ENCODE measurements at regions of chr4 and their contacts with region 1.

Region 1: DNA sequence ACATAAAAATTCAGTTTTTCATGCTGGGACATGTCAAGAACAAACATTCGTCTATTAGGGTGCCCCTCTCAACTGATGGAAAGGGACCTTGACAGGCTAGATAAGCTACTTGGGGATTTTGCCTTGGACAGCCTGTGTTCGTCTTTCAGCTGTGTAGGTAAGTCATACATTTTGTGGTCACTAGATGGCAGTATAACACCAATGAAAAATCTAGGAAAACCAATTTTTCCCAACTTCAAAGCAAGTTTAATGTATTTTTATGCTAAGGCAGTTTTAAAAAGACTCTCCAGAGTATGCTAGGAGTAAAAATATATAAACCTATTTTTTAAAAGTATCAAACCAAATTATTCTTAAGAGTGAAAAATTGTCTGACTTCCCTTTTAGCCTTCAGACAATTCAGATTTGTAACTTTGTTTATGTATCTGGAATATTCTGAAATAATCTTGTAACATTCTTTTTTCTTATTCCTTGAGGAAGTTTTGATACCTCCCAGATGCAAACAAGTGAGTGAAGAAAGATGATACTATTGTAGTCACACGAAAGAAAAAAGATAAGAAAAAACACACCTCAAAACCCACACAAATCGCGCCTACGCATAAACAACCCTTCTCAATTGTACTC is 158.3 kb downstream of the CPE start:
- DNase-seq: peak; percentile 6
- ATAC-seq: no peak
- H3K4me3 Mint-ChIP-seq: no peak overlapping the region
- H3K27ac Mint-ChIP-seq: no peak overlapping the region
- H3K4me1 Mint-ChIP-seq: no peaks in the 10 kb centered on the region
- H3K27me3 Mint-ChIP-seq: peaks cover 5% of the 10 kb centered on the region

Region 2: GRCh38 chr4:165493359-165493758 is 43.8 kb before region 1 on chr4:
- CTCF ChIA-PET with region 1: interaction called, 4 read pairs
- POLR2A ChIA-PET with region 1: no interaction called
- intact Hi-C with region 1: loop called in 1 of 2 experiments (anchors 2 kb)
- DNase-seq: peak; percentile 84
- ATAC-seq: peak; percentile 96
- H3K4me3 Mint-ChIP-seq: no peak overlapping the region
- H3K27ac Mint-ChIP-seq: no peak overlapping the region
- H3K4me1 Mint-ChIP-seq: peaks cover 4% of the 10 kb centered on the region
- H3K27me3 Mint-ChIP-seq: peaks cover 23% of the 10 kb centered on the region

Region 3: DNA sequence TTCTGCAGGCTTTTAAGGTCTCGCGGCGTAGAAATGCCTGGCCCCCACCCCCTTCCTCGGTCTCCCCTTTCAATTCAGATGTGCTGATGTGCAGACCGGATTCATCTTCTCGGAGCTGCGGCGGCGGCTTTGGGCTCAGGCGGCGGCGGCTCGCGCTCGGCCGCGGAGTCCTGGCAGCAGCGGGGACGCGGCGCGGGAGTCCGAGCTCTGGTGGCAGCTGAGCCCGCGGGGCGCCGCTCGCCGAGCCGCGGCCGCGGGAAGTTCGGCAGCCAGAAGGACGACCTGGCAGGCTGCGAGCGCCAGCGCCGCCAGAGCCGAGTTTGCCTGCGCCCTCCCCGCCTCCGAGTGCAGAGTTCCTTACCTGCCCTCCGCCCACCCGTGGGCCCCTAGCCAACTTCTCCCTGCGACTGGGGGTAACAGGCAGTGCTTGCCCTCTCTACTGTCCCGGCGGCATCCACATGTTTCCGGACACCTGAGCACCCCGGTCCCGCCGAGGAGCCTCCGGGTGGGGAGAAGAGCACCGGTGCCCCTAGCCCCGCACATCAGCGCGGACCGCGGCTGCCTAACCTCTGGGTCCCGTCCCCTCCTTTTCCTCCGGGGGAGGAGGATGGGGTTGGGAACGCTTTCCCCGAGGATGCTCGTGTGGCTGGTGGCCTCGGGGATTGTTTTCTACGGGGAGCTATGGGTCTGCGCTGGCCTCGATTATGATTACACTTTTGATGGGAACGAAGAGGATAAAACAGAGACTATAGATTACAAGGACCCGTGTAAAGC is 336.3 kb after region 1 on chr4:
- CTCF ChIA-PET with region 1: no interaction called
- POLR2A ChIA-PET with region 1: no interaction called
- intact Hi-C with region 1: loop called in 1 of 2 experiments (anchors 10 kb)
- DNase-seq: peak; percentile 9
- ATAC-seq: no peak
- H3K4me3 Mint-ChIP-seq: peak overlapping the region; percentile 9
- H3K27ac Mint-ChIP-seq: no peak overlapping the region
- H3K4me1 Mint-ChIP-seq: peaks cover 13% of the 10 kb centered on the region
- H3K27me3 Mint-ChIP-seq: peaks cover 44% of the 10 kb centered on the region

Region 4: GRCh38 chr4:166091912-166092510 is 554.9 kb after region 1 on chr4:
- CTCF ChIA-PET with region 1: interaction called, 7 read pairs
- POLR2A ChIA-PET with region 1: no interaction called
- intact Hi-C with region 1: loop called (anchors 1 kb)
- DNase-seq: no peak
- ATAC-seq: no peak
- H3K4me3 Mint-ChIP-seq: no peak overlapping the region
- H3K27ac Mint-ChIP-seq: no peak overlapping the region
- H3K4me1 Mint-ChIP-seq: no peaks in the 10 kb centered on the region
- H3K27me3 Mint-ChIP-seq: no peaks in the 10 kb centered on the region

Region 5: GRCh38 chr4:166252487-166253402 is 715.6 kb after region 1 on chr4:
- CTCF ChIA-PET with region 1: no interaction called
- POLR2A ChIA-PET with region 1: no interaction called
- intact Hi-C with region 1: loop called in 1 of 2 experiments (anchors 2 kb)
- DNase-seq: no peak
- ATAC-seq: no peak
- H3K4me3 Mint-ChIP-seq: no peak overlapping the region
- H3K27ac Mint-ChIP-seq: no peak overlapping the region
- H3K4me1 Mint-ChIP-seq: no peaks in the 10 kb centered on the region
- H3K27me3 Mint-ChIP-seq: no peaks in the 10 kb centered on the region

Region 6: GRCh38 chr4:166594326-166594946 is 1057.3 kb after region 1 on chr4:
- CTCF ChIA-PET with region 1: no interaction called
- POLR2A ChIA-PET with region 1: no interaction called
- intact Hi-C with region 1: loop called in 1 of 2 experiments (anchors 10 kb)
- DNase-seq: peak; percentile 7
- ATAC-seq: no peak
- H3K4me3 Mint-ChIP-seq: no peak overlapping the region
- H3K27ac Mint-ChIP-seq: no peak overlapping the region
- H3K4me1 Mint-ChIP-seq: no peaks in the 10 kb centered on the region
- H3K27me3 Mint-ChIP-seq: no peaks in the 10 kb centered on the region

Measured in activated CD4-positive, alpha-beta T cell treated with anti-CD3 and anti-CD28 coated beads for 36 hours (primary cell).